H1 (cell line): ENCODE measurements at regions of chr18 and their contacts with region 1.

Region 1: DNA sequence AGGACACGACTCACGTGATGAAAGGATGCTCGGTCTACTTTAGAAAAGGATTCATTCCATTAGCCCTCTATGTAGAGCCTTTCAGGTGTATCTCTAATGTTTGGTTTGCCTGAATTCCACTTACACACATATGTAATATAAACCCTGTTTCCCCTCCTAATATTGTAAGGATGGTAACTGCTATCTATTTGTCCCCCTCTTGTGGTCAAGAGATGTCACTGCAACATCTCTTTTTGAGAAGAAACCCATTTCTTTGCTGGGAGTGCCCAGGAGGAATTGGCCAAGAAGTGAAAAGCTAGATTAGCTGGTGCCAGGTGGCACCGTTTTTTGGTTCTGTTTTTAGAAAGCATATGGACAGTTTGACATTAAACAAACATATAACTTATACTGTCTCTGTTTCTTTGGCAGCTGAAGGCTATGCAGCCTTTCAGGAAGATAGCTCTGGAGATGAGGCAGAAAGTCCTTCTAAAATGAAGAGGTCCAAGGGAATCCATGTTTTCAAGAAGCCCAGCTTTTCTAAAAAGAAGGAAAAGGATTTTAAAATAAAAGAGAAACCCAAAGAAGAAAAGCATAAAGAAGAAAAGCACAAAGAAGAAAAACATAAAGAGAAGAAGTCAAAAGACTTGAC is 41.2 kb downstream of the RALBP1 start:
- DNase-seq: no peak
- H3K4me3 ChIP-seq: no peak overlapping the region
- H3K27ac ChIP-seq: no peak overlapping the region
- H3K4me1 ChIP-seq: 0 out of 7 replicates have a peak, but pooled peaks cover 0 to 3% (median 0%) of the 10 kb centered on the region in 4 experiments
- H3K27me3 ChIP-seq: no peaks in the 10 kb centered on the region
- CTCF ChIP-seq: peak in 2 of 3 experiments; percentile 63 to 84; a peak in 3 of 4 replicates
- EP300 ChIP-seq: no peak
- POLR2A ChIP-seq: no peak
- RAD21 ChIP-seq: peak; percentile 82 to 88

Region 2: DNA sequence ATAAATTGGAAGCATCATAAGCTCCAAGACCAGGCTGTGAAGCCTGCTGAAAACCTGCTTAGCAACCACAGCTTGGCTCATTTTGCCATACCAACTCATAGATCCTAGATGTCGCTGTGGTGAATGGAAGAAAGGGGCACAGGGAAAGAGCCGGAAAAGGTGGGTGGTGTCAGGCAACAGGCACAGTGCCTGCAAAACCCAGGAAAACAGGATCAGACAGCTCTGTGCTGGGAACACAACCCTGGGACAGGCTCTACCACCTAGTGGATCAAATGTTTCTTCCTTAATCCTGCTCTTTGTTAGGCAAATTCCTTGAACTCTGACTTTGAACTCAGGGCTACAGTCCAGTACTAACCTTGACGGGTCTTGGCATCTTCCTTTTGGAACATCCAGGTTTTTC is 150.4 kb before region 1 on chr18:
- CTCF ChIA-PET with region 1: interaction called, 14 read pairs
- POLR2A ChIA-PET with region 1: no interaction called
- DNase-seq: peak; percentile 52 to 59
- H3K4me3 ChIP-seq: no peak overlapping the region
- H3K27ac ChIP-seq: no peak overlapping the region
- H3K4me1 ChIP-seq: peaks cover 0 to 7% (median 1%) of the 10 kb centered on the region in 4 experiments; a peak in 3 of 7 replicates
- H3K27me3 ChIP-seq: no peaks in the 10 kb centered on the region
- CTCF ChIP-seq: peak; percentile 27 to 77 (median 68)
- EP300 ChIP-seq: peak in 1 of 2 experiments; percentile 52; a peak in 1 of 3 replicates
- POLR2A ChIP-seq: no peak
- RAD21 ChIP-seq: peak; percentile 53 to 65

Region 3: GRCh38 chr18:9392726-9393125 is 123.8 kb before region 1 on chr18:
- CTCF ChIA-PET with region 1: interaction called, 25 read pairs
- POLR2A ChIA-PET with region 1: no interaction called
- DNase-seq: no peak
- H3K4me3 ChIP-seq: no peak overlapping the region
- H3K27ac ChIP-seq: no peak overlapping the region
- H3K4me1 ChIP-seq: no peaks in the 10 kb centered on the region
- H3K27me3 ChIP-seq: no peaks in the 10 kb centered on the region
- CTCF ChIP-seq: peak in 1 of 3 experiments; percentile 23; a peak in 1 of 4 replicates
- EP300 ChIP-seq: no peak
- POLR2A ChIP-seq: no peak
- RAD21 ChIP-seq: peak; percentile 41 to 43

Region 4: DNA sequence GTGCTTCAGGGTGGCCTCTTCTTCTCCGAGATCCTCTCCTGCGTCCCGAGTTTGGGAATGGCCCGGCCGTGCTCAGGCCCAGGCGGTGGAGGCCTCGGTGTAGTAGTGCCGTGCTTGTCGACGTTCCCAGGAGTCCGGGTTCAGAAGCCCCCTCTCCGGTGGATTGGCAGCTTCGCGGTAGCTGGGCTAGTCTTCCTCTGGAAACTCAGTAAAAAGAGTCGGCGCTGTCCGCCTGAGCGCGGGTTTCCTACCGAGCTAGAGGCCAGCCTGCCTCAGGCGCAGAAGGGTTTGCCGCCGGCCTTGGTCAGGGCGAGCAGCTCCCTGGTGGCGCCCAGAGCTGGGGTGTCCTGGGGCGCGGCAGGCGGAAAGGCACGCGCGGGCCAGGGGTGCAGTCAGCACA is 38.0 kb before region 1 on chr18:
- CTCF ChIA-PET with region 1: interaction called, 12 read pairs
- POLR2A ChIA-PET with region 1: interaction called, 3 read pairs
- DNase-seq: no peak
- H3K4me3 ChIP-seq: no peak overlapping the region
- H3K27ac ChIP-seq: no peak overlapping the region
- H3K4me1 ChIP-seq: peaks cover 0 to 6% (median 3%) of the 10 kb centered on the region in 4 experiments; a peak in 4 of 7 replicates
- H3K27me3 ChIP-seq: no peaks in the 10 kb centered on the region
- CTCF ChIP-seq: no peak
- EP300 ChIP-seq: no peak
- POLR2A ChIP-seq: no peak
- RAD21 ChIP-seq: no peak

Region 5: GRCh38 chr18:9506046-9506792 is 10.3 kb before region 1 on chr18:
- CTCF ChIA-PET with region 1: interaction called, 20 read pairs
- POLR2A ChIA-PET with region 1: no interaction called
- DNase-seq: no peak
- H3K4me3 ChIP-seq: no peak overlapping the region
- H3K27ac ChIP-seq: no peak overlapping the region
- H3K4me1 ChIP-seq: peaks cover 0 to 2% (median 0%) of the 10 kb centered on the region in 4 experiments; a peak in 1 of 7 replicates
- H3K27me3 ChIP-seq: no peaks in the 10 kb centered on the region
- CTCF ChIP-seq: no peak
- EP300 ChIP-seq: no peak
- POLR2A ChIP-seq: no peak
- RAD21 ChIP-seq: no peak